ENCODE measurements at regions of chr19 and their contacts with region 1.

Region 1: GRCh38 chr19:47765523-47766358 is 12.8 kb upstream of the SELENOW start:
- DNase-seq: peak in 1 of 2 donors; percentile 53
- ATAC-seq: peak; percentile 48 to 76
- H3K4me3 ChIP-seq: no peak overlapping the region
- H3K27ac ChIP-seq: no peak overlapping the region
- H3K4me1 ChIP-seq: peaks cover 5 to 8% of the 10 kb centered on the region in 2 donors
- H3K27me3 ChIP-seq: no peaks in the 10 kb centered on the region
- CTCF ChIP-seq: peak; percentile 67 to 89 (median 87)
- POLR2A ChIP-seq: no peak

Region 2: DNA sequence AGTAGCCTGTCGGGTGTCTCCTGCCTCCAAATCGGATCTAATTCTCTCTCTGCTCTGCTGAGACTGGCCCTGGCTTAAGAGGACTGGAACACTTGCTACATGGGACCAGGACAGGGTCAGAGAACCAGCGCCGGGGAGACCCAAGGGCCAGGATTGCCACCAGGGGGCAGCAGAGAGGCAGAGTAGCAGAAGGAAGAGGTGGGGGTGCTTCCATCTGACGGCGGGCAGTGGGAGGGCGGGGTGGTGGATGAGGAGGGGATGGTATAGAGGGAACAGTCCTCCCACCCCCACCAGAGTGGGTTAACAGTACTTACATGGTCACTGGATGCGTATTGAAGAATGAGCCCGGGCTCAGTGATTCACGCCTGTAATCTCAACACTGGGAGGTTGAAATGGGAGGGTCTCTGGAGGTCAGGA is 24.7 kb after region 1 on chr19:
- in situ Hi-C with region 1: no loop called
- intact Hi-C with region 1: loop called (anchors 1 kb)
- DNase-seq: peak in 1 of 2 donors; percentile 54
- ATAC-seq: no peak
- H3K4me3 ChIP-seq: no peak overlapping the region
- H3K27ac ChIP-seq: no peak overlapping the region
- H3K4me1 ChIP-seq: peaks cover 13 to 16% of the 10 kb centered on the region in 2 donors
- H3K27me3 ChIP-seq: no peaks in the 10 kb centered on the region
- CTCF ChIP-seq: peak in 4 of 5 experiments; percentile 69 to 90 (median 77)
- POLR2A ChIP-seq: no peak

Measured in gastrocnemius medialis (tissue), 4 donors.